Activated CD8-positive, alpha-beta memory T cell treated with anti-CD3 and anti-CD28 coated beads, Interleukin-2, amount 10 ng/mL, durations not matched to agents 7 days and 5 days (primary cell): ENCODE measurements at regions of chr3 and their contacts with region 1.

Region 1: DNA sequence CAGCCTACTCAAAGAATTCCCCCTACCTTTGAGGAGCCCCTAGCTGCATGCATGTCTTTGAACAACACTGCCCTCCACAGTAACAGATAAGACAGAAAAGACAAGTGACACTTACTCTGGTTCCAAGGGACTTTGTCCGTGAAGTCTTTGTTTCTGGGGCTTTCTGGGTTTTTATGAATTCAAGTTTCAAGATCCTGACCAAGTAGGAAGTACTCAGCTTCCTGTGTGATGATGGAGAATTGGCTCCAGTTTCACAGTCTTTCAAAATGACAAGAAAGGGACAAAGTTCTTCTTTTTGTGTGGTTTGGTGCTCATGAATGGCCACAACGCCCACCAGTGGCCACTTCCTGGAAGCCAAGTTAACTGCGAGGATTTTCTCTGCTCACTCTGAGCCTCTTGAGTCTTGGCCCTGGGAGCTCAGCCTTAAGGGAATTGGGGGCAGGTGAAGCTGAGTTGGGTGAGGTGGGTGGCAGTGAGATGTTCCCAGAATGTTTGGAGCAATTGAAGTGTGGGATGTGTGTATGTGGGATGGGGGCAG is at the start of gene CCR1:
- DNase-seq: peak; percentile 89
- ATAC-seq: peak; percentile 67
- H3K4me3 Mint-ChIP-seq: peak within 1 kb of the TSS; percentile 79
- H3K27ac Mint-ChIP-seq: peak within 1 kb of the TSS; percentile 90
- H3K4me1 Mint-ChIP-seq: peaks cover 68% of the 10 kb centered on the region
- H3K27me3 Mint-ChIP-seq: no peaks in the 10 kb centered on the region
- total RNA-seq, gene CCR1: 35.3 to 55.6 TPM

Region 2: DNA sequence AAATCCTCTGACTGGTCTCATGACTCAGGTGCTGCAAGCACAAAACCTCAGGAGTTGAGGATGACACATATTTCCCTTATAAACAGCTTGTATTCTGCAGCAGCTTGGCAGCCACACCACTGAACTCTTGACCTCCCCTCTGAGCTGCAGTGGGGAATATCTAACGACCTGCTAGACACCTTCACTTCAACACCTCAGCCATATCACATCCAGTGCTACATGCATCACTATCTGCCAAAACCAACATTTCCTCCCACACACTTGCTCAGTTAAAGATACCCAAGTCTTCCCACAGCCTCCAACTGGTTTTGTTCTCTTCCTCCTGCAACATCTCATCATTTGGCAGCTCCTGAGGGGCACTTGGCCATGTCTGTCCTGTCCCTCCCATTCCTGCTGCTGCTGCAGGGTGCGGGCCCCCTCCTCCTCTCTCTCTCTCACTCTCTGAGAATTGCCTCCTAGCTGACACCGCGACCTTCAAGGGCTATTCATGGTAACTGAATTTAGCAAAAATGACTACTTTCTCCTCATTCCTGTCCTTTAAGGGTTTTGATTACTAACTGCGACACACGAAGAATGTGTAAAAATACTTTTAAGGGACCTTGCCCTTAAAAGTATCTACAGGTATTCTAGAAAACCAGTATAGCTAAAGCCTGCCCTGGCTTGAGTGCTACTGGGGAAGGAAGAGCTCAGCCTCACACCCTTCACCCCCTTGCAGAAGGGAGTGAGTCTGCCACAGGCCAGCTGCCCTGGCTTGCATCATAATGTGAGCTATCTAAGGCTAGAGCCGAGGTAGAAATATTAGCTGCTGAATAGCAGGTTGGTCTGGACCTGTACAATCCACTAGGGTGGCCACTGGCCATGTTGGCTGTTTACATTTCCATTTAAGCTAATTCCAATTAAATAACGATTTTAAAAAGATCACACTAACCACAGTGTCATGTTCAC is 326.9 kb before region 1 on chr3:
- CTCF ChIA-PET with region 1: no interaction called
- DNase-seq: peak; percentile 81
- ATAC-seq: peak; percentile 88
- H3K4me3 Mint-ChIP-seq: peak overlapping the region; percentile 6
- H3K27ac Mint-ChIP-seq: peak overlapping the region; percentile 69
- H3K4me1 Mint-ChIP-seq: peaks cover 63% of the 10 kb centered on the region
- H3K27me3 Mint-ChIP-seq: peaks cover 48% of the 10 kb centered on the region

Region 3: DNA sequence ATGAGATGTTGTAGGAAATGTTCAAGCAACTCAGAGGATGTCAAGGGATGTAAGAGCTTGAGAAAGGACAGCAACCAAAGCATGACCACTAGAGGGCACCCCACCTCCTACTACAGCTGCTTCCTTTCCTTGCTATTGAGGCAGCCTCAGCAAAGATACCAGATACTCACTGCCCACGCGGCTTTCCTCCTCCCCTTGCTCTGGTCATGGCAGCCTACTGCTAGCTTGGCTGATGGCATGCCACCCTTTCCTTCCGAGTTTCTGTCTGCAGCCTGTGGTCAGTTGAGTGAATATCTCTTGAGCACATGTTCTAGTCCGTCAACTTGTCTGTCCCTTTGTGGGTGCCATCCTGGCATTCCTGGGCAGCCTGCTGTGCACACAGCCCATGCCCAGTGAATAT is 269.4 kb before region 1 on chr3:
- CTCF ChIA-PET with region 1: interaction called, 17 read pairs
- DNase-seq: peak; percentile 93
- ATAC-seq: peak; percentile 79
- H3K4me3 Mint-ChIP-seq: no peak overlapping the region
- H3K27ac Mint-ChIP-seq: peak overlapping the region; percentile 57
- H3K4me1 Mint-ChIP-seq: peaks cover 58% of the 10 kb centered on the region
- H3K27me3 Mint-ChIP-seq: no peaks in the 10 kb centered on the region

Region 4: DNA sequence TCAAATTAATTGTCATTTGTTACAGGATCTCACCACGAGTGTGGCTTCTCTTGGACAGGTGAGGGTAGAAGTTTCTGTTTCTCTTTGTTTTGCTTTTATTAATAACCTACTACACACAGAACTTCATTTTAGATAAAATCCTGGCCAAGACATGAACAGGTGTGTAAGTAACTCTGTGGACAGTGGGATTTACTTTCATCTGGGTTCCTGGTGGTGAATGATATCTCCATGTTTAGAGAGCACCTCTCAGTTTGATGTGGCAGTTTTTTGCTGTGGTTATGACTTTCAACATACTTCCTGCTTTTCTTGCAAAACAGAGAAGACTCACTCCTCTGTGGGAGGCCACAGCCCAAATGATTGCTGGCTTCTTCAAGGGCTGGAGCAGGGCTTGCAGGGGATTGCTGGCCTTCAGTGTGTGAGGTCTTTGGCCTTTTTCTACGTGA is 109.9 kb before region 1 on chr3:
- CTCF ChIA-PET with region 1: interaction called, 94 read pairs
- DNase-seq: peak; percentile 90
- ATAC-seq: peak; percentile 69
- H3K4me3 Mint-ChIP-seq: peak overlapping the region; percentile 22
- H3K27ac Mint-ChIP-seq: peak overlapping the region; percentile 96
- H3K4me1 Mint-ChIP-seq: peaks cover 83% of the 10 kb centered on the region
- H3K27me3 Mint-ChIP-seq: no peaks in the 10 kb centered on the region

Region 5: DNA sequence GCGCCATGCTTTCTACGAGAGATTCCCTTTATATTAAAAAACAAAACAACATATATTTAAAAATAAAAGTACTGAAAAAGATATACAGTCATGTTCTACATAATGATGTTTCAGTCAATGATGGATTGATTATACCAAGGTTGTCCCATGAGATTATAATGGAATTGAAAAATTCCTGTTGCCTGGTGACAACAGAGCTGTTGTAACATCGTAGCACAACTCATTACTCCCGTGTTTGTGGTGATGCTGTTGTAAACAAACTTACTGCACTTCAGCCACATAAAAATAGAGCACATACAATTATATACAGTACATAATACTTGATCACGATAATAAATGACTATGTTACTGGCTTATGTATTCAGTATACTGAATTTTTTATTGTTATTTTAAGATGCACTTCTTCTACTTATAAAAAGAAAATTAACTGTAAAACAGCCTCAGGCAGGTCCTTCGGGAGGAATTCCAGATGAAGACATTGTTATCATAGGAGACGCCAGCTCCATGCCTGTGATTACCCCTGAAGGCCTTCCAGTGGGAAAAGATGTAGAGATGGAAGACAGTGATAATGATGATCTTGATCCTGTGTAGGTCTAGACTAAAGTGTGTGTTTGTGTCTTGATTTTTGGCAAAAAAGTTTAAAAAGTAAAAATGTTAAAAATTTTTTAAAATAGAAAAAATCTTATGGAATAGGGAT is 11.8 kb before region 1 on chr3:
- CTCF ChIA-PET with region 1: interaction called, 25 read pairs
- DNase-seq: no peak
- ATAC-seq: no peak
- H3K4me3 Mint-ChIP-seq: no peak overlapping the region
- H3K27ac Mint-ChIP-seq: no peak overlapping the region
- H3K4me1 Mint-ChIP-seq: peaks cover 4% of the 10 kb centered on the region
- H3K27me3 Mint-ChIP-seq: peaks cover 5% of the 10 kb centered on the region

Region 6: GRCh38 chr3:46378426-46378942 is 170.2 kb after region 1 on chr3:
- CTCF ChIA-PET with region 1: interaction called, 248 read pairs
- DNase-seq: peak; percentile 81
- ATAC-seq: peak; percentile 34
- H3K4me3 Mint-ChIP-seq: no peak overlapping the region
- H3K27ac Mint-ChIP-seq: peak overlapping the region; percentile 53
- H3K4me1 Mint-ChIP-seq: peaks cover 72% of the 10 kb centered on the region
- H3K27me3 Mint-ChIP-seq: peaks cover 6% of the 10 kb centered on the region